ENCODE measurements at regions of chr10 and their contacts with region 1.

Region 1: GRCh38 chr10:91797874-91798648 is at the start of gene TNKS2:
- DNase-seq: peak; percentile 74 to 97
- H3K4me3 ChIP-seq: peak within 1 kb of the TSS; percentile 96 to 98
- H3K27ac ChIP-seq: peak within 1 kb of the TSS; percentile 93 to 97
- H3K4me1 ChIP-seq: peaks cover 7 to 28% of the 10 kb centered on the region in 2 donors
- H3K27me3 ChIP-seq: no peaks in the 10 kb centered on the region
- CTCF ChIP-seq: no peak
- total RNA-seq, gene TNKS2: 26.4 TPM

Region 2: DNA sequence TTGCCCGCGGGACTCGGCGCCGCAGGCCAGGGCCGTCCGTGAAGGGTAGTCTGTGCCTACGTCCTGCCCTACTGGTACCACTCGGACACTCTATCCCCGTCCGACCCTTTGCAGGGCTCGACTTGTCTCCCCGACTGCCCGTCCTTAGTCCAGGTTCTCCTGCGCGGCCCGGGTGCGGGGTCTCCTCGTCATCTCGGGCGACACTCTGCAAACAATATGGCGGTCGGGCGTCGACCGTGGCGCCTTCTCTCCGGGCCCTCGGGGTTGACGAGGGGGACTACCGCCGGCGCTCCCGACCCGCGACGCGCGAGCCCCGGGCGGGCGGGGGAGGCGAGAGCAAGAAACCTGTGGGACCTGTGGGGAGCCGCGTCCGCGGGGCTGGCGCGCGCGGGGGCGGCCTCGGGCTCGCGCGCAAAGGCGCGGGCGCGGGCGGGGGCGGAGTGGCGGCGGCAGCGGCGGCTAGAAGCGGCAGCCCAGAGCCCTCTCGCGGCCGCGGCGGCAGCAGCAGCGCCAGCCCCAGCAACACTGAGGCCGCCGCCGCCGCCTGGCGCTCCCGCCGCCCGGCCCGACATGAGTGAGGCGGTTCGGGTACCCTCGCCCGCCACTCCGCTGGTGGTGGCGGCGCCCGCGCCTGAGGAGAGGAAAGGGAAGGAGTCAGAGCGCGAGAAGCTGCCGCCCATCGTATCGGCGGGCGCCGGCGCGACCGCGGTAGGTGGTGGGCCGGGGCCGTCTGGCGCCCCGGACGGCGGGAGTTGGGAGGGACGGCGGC is 388.0 kb before region 1 on chr10 and contains the start of gene HECTD2:
- intact Hi-C with region 1: loop called (anchors 2 kb)
- DNase-seq: peak in 1 of 2 donors; percentile 85
- H3K4me3 ChIP-seq: peak within 1 kb of the TSS; percentile 90 to 95
- H3K27ac ChIP-seq: peak within 1 kb of the TSS; percentile 99 to 100
- H3K4me1 ChIP-seq: peaks cover 2 to 7% of the 10 kb centered on the region in 2 donors
- H3K27me3 ChIP-seq: no peaks in the 10 kb centered on the region
- CTCF ChIP-seq: peak in 2 of 3 experiments; percentile 36 to 76
- total RNA-seq, gene HECTD2: 25.4 TPM

Region 3: GRCh38 chr10:91493313-91493712 is 304.7 kb before region 1 on chr10:
- intact Hi-C with region 1: loop called (anchors 5 kb)
- DNase-seq: no peak
- H3K4me3 ChIP-seq: no peak overlapping the region
- H3K27ac ChIP-seq: no peak overlapping the region
- H3K4me1 ChIP-seq: no peaks in the 10 kb centered on the region
- H3K27me3 ChIP-seq: no peaks in the 10 kb centered on the region
- CTCF ChIP-seq: peak; percentile 42 to 62 (median 55)

Region 4: DNA sequence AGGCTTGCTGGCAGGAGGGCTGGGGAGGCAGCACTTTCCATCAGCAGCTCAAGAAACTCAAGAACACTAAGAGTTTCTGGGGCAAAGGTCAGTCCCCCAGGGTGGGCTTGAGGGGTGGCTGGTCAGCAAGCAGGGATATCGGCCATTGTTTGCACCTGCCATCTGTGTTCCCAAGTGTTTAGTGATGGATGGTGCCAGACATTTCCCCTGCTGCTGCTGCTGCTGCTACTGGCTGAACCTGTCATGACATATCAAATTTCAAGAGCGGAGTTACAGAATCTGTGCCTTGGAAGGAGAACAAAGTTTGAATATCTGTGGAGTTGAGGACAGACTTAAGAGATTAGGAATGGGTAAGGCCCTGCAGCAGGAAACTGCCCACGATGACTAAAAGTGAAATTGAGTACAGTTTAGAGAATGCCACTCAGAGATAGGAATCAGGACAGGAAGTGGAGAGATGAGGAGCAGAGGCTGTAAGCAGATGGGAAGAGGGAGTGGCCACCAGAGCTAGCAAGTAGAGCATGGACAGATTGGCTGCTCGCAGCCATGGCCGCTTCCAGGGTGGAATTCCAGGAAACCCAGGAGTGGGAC is 125.9 kb before region 1 on chr10:
- intact Hi-C with region 1: no loop called
- DNase-seq: no peak
- H3K4me3 ChIP-seq: no peak overlapping the region
- H3K27ac ChIP-seq: no peak overlapping the region
- H3K4me1 ChIP-seq: no peaks in the 10 kb centered on the region
- H3K27me3 ChIP-seq: no peaks in the 10 kb centered on the region
- CTCF ChIP-seq: no peak

Region 5: DNA sequence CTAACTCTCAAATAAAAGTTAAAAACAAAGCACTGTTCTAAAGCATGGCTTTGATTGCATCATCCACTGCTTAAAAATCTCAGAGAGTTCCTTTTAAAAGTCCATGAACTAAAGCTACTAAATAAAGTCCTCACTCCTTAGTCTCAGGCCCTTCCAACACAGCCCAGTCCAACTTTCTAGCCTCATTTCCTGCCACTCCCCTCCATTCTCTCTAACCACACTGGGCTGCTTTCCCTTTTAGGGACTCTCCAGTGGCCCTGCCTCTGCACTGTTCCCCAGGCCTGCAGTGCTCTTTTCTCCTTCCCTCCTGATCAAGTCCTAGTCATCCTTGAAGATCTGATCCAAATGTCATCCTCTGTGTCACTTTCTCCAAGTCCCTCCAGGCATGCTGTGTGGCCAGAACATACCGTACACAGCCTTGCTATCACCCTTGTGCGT is 108.3 kb before region 1 on chr10:
- intact Hi-C with region 1: no loop called
- DNase-seq: peak; percentile 31 to 78
- H3K4me3 ChIP-seq: no peak overlapping the region
- H3K27ac ChIP-seq: peak overlapping the region; percentile 74 to 80
- H3K4me1 ChIP-seq: peaks cover 6 to 11% of the 10 kb centered on the region in 2 donors
- H3K27me3 ChIP-seq: no peaks in the 10 kb centered on the region
- CTCF ChIP-seq: no peak

Region 6: GRCh38 chr10:91887272-91888076 is 89.4 kb after region 1 on chr10:
- intact Hi-C with region 1: loop called (anchors 5 kb)
- DNase-seq: peak in 1 of 2 donors; percentile 73
- H3K4me3 ChIP-seq: peak overlapping the region; percentile 66 to 78
- H3K27ac ChIP-seq: peak overlapping the region; percentile 28 to 76
- H3K4me1 ChIP-seq: peaks cover 3 to 20% of the 10 kb centered on the region in 2 donors
- H3K27me3 ChIP-seq: no peaks in the 10 kb centered on the region
- CTCF ChIP-seq: no peak

Region 7: DNA sequence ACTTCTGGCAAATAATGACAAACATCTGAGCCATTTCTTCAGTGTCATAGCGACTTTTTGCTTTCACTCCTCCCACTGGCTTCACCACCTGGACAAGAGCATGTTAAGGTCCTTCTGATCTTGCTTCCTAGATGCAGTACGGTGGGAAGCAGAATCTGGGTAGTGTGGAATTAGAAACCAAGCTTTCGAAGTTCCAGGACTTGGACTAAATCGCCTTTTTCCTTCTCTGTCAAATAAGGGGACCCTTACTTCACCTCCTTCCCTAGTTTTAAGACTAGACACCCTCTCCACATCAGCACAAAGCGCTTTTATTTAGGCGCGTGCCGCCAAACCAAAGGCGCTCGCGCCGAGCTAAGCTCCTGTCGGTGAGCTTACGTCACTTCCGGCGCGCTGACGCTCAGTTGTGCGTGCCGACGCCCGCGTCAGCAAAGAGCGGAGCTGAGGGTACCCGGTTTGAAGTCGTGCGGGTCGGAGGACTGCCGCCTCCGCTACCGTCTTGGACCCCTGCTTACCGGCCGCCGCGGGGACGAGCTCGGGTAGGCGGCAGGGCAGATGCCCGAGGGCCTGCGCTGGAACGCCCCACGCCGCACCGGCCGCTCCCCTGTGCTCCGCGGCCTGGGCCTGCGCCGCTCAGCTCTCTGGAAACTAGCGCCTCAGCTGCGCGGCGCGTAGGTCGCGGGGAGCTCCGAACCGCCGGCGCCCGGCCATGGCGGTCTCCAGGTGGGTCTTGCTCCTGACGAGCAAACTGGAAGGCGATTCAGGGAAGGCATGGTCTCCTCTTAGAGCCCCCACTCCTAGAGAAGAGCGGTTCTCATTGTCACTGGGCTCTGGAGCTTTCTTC is 125.5 kb after region 1 on chr10 and contains the start of gene BTAF1:
- intact Hi-C with region 1: loop called (anchors 5 kb)
- DNase-seq: peak; percentile 52 to 94
- H3K4me3 ChIP-seq: peak within 1 kb of the TSS; percentile 89 to 97
- H3K27ac ChIP-seq: peak within 1 kb of the TSS; percentile 94 to 98
- H3K4me1 ChIP-seq: peaks cover 2 to 10% of the 10 kb centered on the region in 2 donors
- H3K27me3 ChIP-seq: no peaks in the 10 kb centered on the region
- CTCF ChIP-seq: no peak
- total RNA-seq, gene BTAF1: 19.9 TPM

Measured in ascending aorta (tissue), 2 donors.